ENCODE measurements at regions of chr7 and their contacts with region 1.

Region 1: GRCh38 chr7:138002096-138002827 is 376 bp upstream of the CREB3L2 start:
- DNase-seq: peak; percentile 98
- ATAC-seq: peak; percentile 96
- H3K4me3 Mint-ChIP-seq: peak overlapping the region; percentile 94
- H3K27ac Mint-ChIP-seq: peak overlapping the region; percentile 93
- H3K4me1 Mint-ChIP-seq: peaks cover 25% of the 10 kb centered on the region
- H3K27me3 Mint-ChIP-seq: no peaks in the 10 kb centered on the region
- CTCF ChIP-seq: peak; percentile 89

Region 2: GRCh38 chr7:137915266-137915665 is 87.0 kb before region 1 on chr7:
- CTCF ChIA-PET with region 1: interaction called, 15 read pairs
- POLR2A ChIA-PET with region 1: no interaction called
- intact Hi-C with region 1: no loop called
- DNase-seq: no peak
- ATAC-seq: no peak
- H3K4me3 Mint-ChIP-seq: no peak overlapping the region
- H3K27ac Mint-ChIP-seq: no peak overlapping the region
- H3K4me1 Mint-ChIP-seq: peaks cover 3% of the 10 kb centered on the region
- H3K27me3 Mint-ChIP-seq: no peaks in the 10 kb centered on the region
- CTCF ChIP-seq: no peak

Region 3: GRCh38 chr7:138015096-138015495 is 12.8 kb after region 1 on chr7:
- CTCF ChIA-PET with region 1: interaction called, 40 read pairs
- POLR2A ChIA-PET with region 1: interaction called, 4 read pairs
- intact Hi-C with region 1: no loop called
- DNase-seq: no peak
- ATAC-seq: no peak
- H3K4me3 Mint-ChIP-seq: no peak overlapping the region
- H3K27ac Mint-ChIP-seq: no peak overlapping the region
- H3K4me1 Mint-ChIP-seq: no peaks in the 10 kb centered on the region
- H3K27me3 Mint-ChIP-seq: no peaks in the 10 kb centered on the region
- CTCF ChIP-seq: no peak